Esophagus muscularis mucosa (tissue), 4 donors: ENCODE measurements at regions of chr5 and their contacts with region 1.

Region 1: GRCh38 chr5:118791926-118792734 is 196.2 kb downstream of the DTWD2 start:
- DNase-seq: no peak
- H3K4me3 ChIP-seq: peak overlapping the region; percentile 19 to 33 (median 27)
- H3K27ac ChIP-seq: peak overlapping the region; percentile 18 to 64 (median 54)
- H3K4me1 ChIP-seq: peaks cover 9 to 19% (median 14%) of the 10 kb centered on the region in 4 donors
- H3K27me3 ChIP-seq: no peaks in the 10 kb centered on the region
- CTCF ChIP-seq: peak; percentile 80 to 91 (median 82)
- EP300 ChIP-seq: no peak
- POLR2A ChIP-seq: no peak

Region 2: DNA sequence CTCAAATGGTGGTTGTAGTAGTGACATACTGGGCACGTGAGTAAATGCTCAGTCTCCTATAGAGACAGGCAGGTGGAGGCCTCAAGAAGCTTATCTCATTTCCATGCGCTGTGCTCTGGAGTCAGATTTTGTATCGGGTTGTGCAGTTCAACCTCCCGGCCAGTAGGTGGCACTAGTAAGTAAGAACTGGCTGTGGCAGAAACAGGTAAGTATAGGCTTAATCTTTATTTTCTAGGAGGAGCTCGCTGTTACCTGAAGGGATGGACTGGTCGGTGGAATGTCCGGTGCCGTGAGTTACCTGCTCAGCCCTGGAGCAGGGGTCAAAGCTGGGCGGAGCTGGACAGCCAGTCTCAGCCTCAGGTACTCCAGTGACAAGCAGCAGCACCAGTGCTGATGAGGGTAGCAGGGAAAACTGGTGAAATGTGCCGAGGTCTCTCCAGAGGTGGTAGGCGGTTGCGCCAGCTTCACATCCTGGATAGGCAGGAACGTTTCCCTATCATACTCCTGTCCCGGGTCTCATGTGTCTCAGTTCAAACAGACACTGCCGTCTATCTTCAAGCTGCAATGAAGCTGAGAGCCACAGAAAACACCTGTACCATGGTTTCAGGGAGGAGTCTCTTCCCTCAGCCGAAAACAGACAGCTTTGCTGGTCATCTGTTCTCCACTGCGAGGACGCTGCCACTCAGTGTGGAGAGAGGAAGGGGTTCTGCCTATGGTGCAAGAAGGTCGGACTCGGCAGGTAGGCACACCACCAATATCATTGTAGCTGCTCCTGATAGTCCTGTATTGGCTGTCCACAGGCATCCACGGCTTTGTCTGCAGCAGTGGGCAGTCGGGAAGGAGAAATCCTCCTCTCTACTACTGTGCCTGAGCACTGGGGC is 1337.2 kb before region 1 on chr5:
- intact Hi-C with region 1: loop called (anchors 5 kb)
- DNase-seq: no peak
- H3K4me3 ChIP-seq: peak overlapping the region in 1 of 4 donors; percentile 29
- H3K27ac ChIP-seq: no peak overlapping the region
- H3K4me1 ChIP-seq: peaks cover 0 to 5% (median 0%) of the 10 kb centered on the region in 4 donors
- H3K27me3 ChIP-seq: no peaks in the 10 kb centered on the region
- CTCF ChIP-seq: peak; percentile 63 to 88 (median 78)
- EP300 ChIP-seq: no peak
- POLR2A ChIP-seq: no peak

Region 3: GRCh38 chr5:117590944-117591343 is 1201.2 kb before region 1 on chr5:
- intact Hi-C with region 1: loop called (anchors 5 kb)
- DNase-seq: no peak
- H3K4me3 ChIP-seq: no peak overlapping the region
- H3K27ac ChIP-seq: no peak overlapping the region
- H3K4me1 ChIP-seq: peaks cover 0 to 20% (median 12%) of the 10 kb centered on the region in 4 donors
- H3K27me3 ChIP-seq: no peaks in the 10 kb centered on the region
- CTCF ChIP-seq: peak; percentile 28 to 54 (median 31)
- EP300 ChIP-seq: no peak
- POLR2A ChIP-seq: no peak